IMR-90 (cell line): ENCODE measurements at regions of chr17 and their contacts with region 1.

Region 1: GRCh38 chr17:66301797-66302741 is at the start of gene PRKCA:
- DNase-seq: peak; percentile 69
- ATAC-seq: peak; percentile 84
- H3K4me3 ChIP-seq: peak within 1 kb of the TSS; percentile 84
- H3K27ac ChIP-seq: peak within 1 kb of the TSS; percentile 76
- H3K4me1 ChIP-seq: peaks cover 3% of the 10 kb centered on the region
- H3K27me3 ChIP-seq: no peaks in the 10 kb centered on the region
- CTCF ChIP-seq: no peak
- POLR2A ChIP-seq: peak; percentile 92
- RAD21 ChIP-seq: peak; percentile 15; the same call in 1 of the 2 replicates
- total RNA-seq, gene PRKCA: 31.0 and 36.9 TPM in 2 replicates

Region 2: GRCh38 chr17:66364990-66365490 is 63.0 kb after region 1 on chr17:
- CTCF ChIA-PET with region 1: no interaction called
- POLR2A ChIA-PET with region 1: no interaction called
- dilution Hi-C with region 1: no loop called
- in situ Hi-C with region 1: no loop called
- intact Hi-C with region 1: no loop called
- DNase-seq: no peak
- ATAC-seq: no peak
- H3K4me3 ChIP-seq: no peak overlapping the region
- H3K27ac ChIP-seq: no peak overlapping the region
- H3K4me1 ChIP-seq: peaks cover 3% of the 10 kb centered on the region; the same call in 1 of the 2 replicates
- H3K27me3 ChIP-seq: no peaks in the 10 kb centered on the region
- CTCF ChIP-seq: no peak
- POLR2A ChIP-seq: no peak
- RAD21 ChIP-seq: no peak

Region 3: GRCh38 chr17:66431910-66432683 is 130.0 kb after region 1 on chr17:
- CTCF ChIA-PET with region 1: no interaction called
- POLR2A ChIA-PET with region 1: no interaction called
- dilution Hi-C with region 1: no loop called
- in situ Hi-C with region 1: no loop called
- intact Hi-C with region 1: loop called (anchors 5 kb)
- DNase-seq: peak; percentile 92
- ATAC-seq: peak; percentile 81
- H3K4me3 ChIP-seq: peak overlapping the region; percentile 11; the same call in 1 of the 2 replicates
- H3K27ac ChIP-seq: peak overlapping the region; percentile 80
- H3K4me1 ChIP-seq: peaks cover 19% of the 10 kb centered on the region
- H3K27me3 ChIP-seq: no peaks in the 10 kb centered on the region
- CTCF ChIP-seq: no peak
- POLR2A ChIP-seq: no peak
- RAD21 ChIP-seq: no peak

Region 4: GRCh38 chr17:66541461-66542128 is 239.5 kb after region 1 on chr17:
- CTCF ChIA-PET with region 1: no interaction called
- POLR2A ChIA-PET with region 1: no interaction called
- dilution Hi-C with region 1: no loop called
- in situ Hi-C with region 1: no loop called
- intact Hi-C with region 1: loop called (anchors 2 kb)
- DNase-seq: no peak
- ATAC-seq: no peak
- H3K4me3 ChIP-seq: no peak overlapping the region
- H3K27ac ChIP-seq: peak overlapping the region; percentile 3
- H3K4me1 ChIP-seq: peaks cover 35% of the 10 kb centered on the region
- H3K27me3 ChIP-seq: no peaks in the 10 kb centered on the region
- CTCF ChIP-seq: no peak
- POLR2A ChIP-seq: no peak
- RAD21 ChIP-seq: no peak

Region 5: DNA sequence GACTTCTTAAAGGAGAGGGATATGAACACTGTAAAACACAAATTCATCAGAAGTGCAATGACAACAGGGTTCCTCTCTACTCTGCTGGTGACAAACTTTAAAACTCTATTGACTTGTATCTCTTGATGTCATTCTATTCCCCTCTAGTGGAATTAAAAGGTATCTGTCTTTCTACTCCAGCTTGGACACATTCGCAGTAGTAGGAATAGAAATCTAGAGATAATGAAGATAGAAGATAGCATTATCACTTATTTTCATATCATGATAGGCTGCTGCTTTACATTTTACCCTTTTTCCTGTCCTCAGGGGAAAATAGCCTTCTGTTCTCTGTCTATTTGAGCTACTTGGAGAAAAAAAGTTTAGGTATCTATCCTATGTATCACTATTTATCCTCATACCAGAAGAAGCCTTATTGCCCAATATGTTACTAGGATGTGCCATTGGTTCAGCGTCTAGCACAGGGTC is 323.3 kb after region 1 on chr17:
- CTCF ChIA-PET with region 1: no interaction called
- POLR2A ChIA-PET with region 1: no interaction called
- dilution Hi-C with region 1: no loop called
- in situ Hi-C with region 1: no loop called
- intact Hi-C with region 1: loop called (anchors 2 kb)
- DNase-seq: peak; percentile 49
- ATAC-seq: peak; percentile 77
- H3K4me3 ChIP-seq: no peak overlapping the region
- H3K27ac ChIP-seq: no peak overlapping the region
- H3K4me1 ChIP-seq: no peaks in the 10 kb centered on the region
- H3K27me3 ChIP-seq: no peaks in the 10 kb centered on the region
- CTCF ChIP-seq: peak; percentile 58
- POLR2A ChIP-seq: no peak
- RAD21 ChIP-seq: peak; percentile 67

Region 6: GRCh38 chr17:67575325-67575724 is 1273.3 kb after region 1 on chr17:
- CTCF ChIA-PET with region 1: no interaction called
- POLR2A ChIA-PET with region 1: no interaction called
- dilution Hi-C with region 1: no loop called
- in situ Hi-C with region 1: no loop called
- intact Hi-C with region 1: no loop called
- DNase-seq: no peak
- ATAC-seq: no peak
- H3K4me3 ChIP-seq: no peak overlapping the region
- H3K27ac ChIP-seq: no peak overlapping the region
- H3K4me1 ChIP-seq: no peaks in the 10 kb centered on the region
- H3K27me3 ChIP-seq: no peaks in the 10 kb centered on the region
- CTCF ChIP-seq: no peak
- POLR2A ChIP-seq: no peak
- RAD21 ChIP-seq: no peak